ENCODE measurements at regions of chr17 and their contacts with region 1.

Region 1: GRCh38 chr17:81553018-81553615 is 964 bp upstream of the FAAP100 start:
- DNase-seq: peak; percentile 81
- H3K4me3 ChIP-seq: peak overlapping the region; percentile 61 to 93 (median 72)
- H3K27ac ChIP-seq: peak overlapping the region; percentile 79
- H3K4me1 ChIP-seq: peaks cover 46% of the 10 kb centered on the region
- H3K27me3 ChIP-seq: no peaks in the 10 kb centered on the region
- CTCF ChIP-seq: no peak
- POLR2A ChIP-seq: peak; percentile 73

Region 2: GRCh38 chr17:81512560-81513371 is 40.4 kb before region 1 on chr17 and contains the start of gene ACTG1:
- CTCF ChIA-PET with region 1: no interaction called
- POLR2A ChIA-PET with region 1: no interaction called
- dilution Hi-C with region 1: no loop called
- intact Hi-C with region 1: loop called (anchors 1 kb)
- DNase-seq: peak; percentile 88
- H3K4me3 ChIP-seq: peak within 1 kb of the TSS; percentile 42 to 93 (median 78)
- H3K27ac ChIP-seq: peak within 1 kb of the TSS; percentile 60
- H3K4me1 ChIP-seq: peaks cover 36% of the 10 kb centered on the region
- H3K27me3 ChIP-seq: no peaks in the 10 kb centered on the region
- CTCF ChIP-seq: no peak
- POLR2A ChIP-seq: peak; percentile 99
- total RNA-seq, gene ACTG1: 6,127 and 6,180 TPM in 2 replicates

Region 3: GRCh38 chr17:81576621-81577277 is 23.6 kb after region 1 on chr17:
- CTCF ChIA-PET with region 1: interaction called, 6 read pairs
- POLR2A ChIA-PET with region 1: interaction called, 3 read pairs
- dilution Hi-C with region 1: no loop called
- intact Hi-C with region 1: loop called (anchors 2 kb)
- DNase-seq: peak; percentile 78
- H3K4me3 ChIP-seq: peak overlapping the region in 1 of 3 experiments; percentile 13
- H3K27ac ChIP-seq: peak overlapping the region; percentile 81
- H3K4me1 ChIP-seq: peaks cover 27% of the 10 kb centered on the region
- H3K27me3 ChIP-seq: no peaks in the 10 kb centered on the region
- CTCF ChIP-seq: no peak
- POLR2A ChIP-seq: peak; percentile 60

Measured in endothelial cell of umbilical vein (primary cell).